Motor neuron (in vitro differentiated cells): ENCODE measurements at regions of chr19 and their contacts with region 1.

Region 1: GRCh38 chr19:44570984-44571684 is 41.7 kb upstream of the CEACAM20 start:
- ATAC-seq: peak in 4 of 8 experiments; percentile 23 to 89 (median 72)
- H3K4me3 ChIP-seq: no peak overlapping the region
- H3K27ac ChIP-seq: no peak overlapping the region
- H3K4me1 ChIP-seq: no peaks in the 10 kb centered on the region

Region 2: GRCh38 chr19:44653977-44654774 is 83.0 kb after region 1 on chr19:
- in situ Hi-C with region 1: loop called in 2 of 9 experiments (anchors 5 to 10 kb)
- ATAC-seq: peak in 6 of 8 experiments; percentile 22 to 66 (median 36)
- H3K4me3 ChIP-seq: no peak overlapping the region
- H3K27ac ChIP-seq: no peak overlapping the region
- H3K4me1 ChIP-seq: no peaks in the 10 kb centered on the region

Region 3: DNA sequence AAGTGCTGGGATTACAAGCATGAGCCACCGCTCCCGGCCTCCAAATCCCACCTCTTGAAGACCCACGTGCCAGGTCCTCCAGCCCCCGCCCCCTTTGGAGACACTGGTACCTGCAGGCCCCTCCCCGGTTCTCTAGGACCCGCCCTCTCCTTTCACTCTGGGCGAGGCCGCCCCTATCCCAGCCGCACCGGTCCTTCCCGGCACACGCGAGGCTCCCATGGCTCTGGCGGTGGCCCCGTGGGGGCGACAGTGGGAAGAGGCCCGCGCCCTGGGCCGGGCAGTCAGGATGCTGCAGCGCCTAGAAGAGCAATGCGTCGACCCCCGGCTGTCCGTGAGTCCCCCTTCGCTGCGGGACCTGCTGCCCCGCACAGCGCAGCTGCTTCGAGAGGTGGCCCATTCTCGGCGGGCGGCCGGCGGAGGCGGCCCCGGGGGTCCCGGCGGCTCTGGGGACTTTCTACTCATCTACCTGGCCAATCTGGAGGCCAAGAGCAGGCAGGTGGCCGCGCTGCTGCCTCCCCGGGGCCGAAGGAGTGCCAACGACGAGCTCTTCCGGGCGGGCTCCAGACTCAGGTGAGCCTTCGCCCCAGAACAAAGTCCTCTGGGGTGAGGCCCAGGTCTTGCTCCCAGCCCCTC is 206.7 kb after region 1 on chr19 and contains the start of gene CBLC:
- in situ Hi-C with region 1: loop called in 1 of 9 experiments (anchors 25 kb)
- ATAC-seq: peak in 6 of 8 experiments; percentile 65 to 91 (median 82)
- H3K4me3 ChIP-seq: no peak within 1 kb of the TSS
- H3K27ac ChIP-seq: no peak within 1 kb of the TSS
- H3K4me1 ChIP-seq: no peaks in the 10 kb centered on the region
- total RNA-seq, gene CBLC: not detected

Region 4: GRCh38 chr19:44845612-44846454 is 274.7 kb after region 1 on chr19 and contains the start of gene NECTIN2:
- in situ Hi-C with region 1: loop called in 1 of 9 experiments (anchors 25 kb)
- ATAC-seq: peak; percentile 55 to 73 (median 68)
- H3K4me3 ChIP-seq: peak within 1 kb of the TSS; percentile 92 to 99 (median 97)
- H3K27ac ChIP-seq: peak within 1 kb of the TSS; percentile 82 to 91
- H3K4me1 ChIP-seq: peaks cover 12 to 20% of the 10 kb centered on the region in 2 donors
- total RNA-seq, gene NECTIN2: 35.7 to 99.7 (median 49.5) TPM